Mammary epithelial cell (primary cell): ENCODE measurements at regions of chr3 and their contacts with region 1.

Region 1: GRCh38 chr3:33236005-33236404 is 17.4 kb upstream of the SUSD5 start:
- DNase-seq: no peak
- H3K4me3 ChIP-seq: no peak overlapping the region
- H3K27ac ChIP-seq: no peak overlapping the region
- H3K4me1 ChIP-seq: no peaks in the 10 kb centered on the region
- H3K27me3 ChIP-seq: peaks cover 4% of the 10 kb centered on the region
- CTCF ChIP-seq: no peak

Region 2: GRCh38 chr3:33152363-33153360 is 83.3 kb before region 1 on chr3:
- CTCF ChIA-PET with region 1: no interaction called
- dilution Hi-C with region 1: no loop called
- in situ Hi-C with region 1: no loop called
- intact Hi-C with region 1: no loop called
- DNase-seq: peak; percentile 45
- H3K4me3 ChIP-seq: no peak overlapping the region
- H3K27ac ChIP-seq: no peak overlapping the region
- H3K4me1 ChIP-seq: peaks cover 3% of the 10 kb centered on the region
- H3K27me3 ChIP-seq: no peaks in the 10 kb centered on the region
- CTCF ChIP-seq: no peak

Region 3: GRCh38 chr3:33202711-33203457 is 33.1 kb before region 1 on chr3:
- CTCF ChIA-PET with region 1: no interaction called
- dilution Hi-C with region 1: no loop called
- in situ Hi-C with region 1: no loop called
- intact Hi-C with region 1: loop called (anchors 5 kb)
- DNase-seq: no peak
- H3K4me3 ChIP-seq: no peak overlapping the region
- H3K27ac ChIP-seq: no peak overlapping the region
- H3K4me1 ChIP-seq: no peaks in the 10 kb centered on the region
- H3K27me3 ChIP-seq: no peaks in the 10 kb centered on the region
- CTCF ChIP-seq: no peak